ENCODE measurements at regions of chr7 and their contacts with region 1.

Region 1: DNA sequence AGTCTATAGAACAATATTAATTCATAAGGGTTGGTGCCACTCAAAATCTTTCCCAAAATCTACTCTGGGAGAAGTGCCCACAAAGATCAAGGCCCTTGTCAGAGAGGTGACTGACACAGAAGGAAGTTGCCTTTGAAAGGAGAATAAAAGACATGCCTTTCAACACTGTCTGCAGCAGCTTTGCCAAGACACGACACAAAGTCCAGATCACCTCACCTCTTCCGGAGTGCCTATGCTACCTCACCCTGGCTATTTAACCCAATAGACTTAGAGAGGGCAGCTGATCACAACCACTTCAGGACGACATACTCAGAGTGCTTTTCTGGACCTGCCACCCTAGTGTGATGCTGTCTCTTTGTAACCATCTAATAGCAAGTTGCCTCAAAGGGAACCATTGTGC is 49.0 kb upstream of the YAE1 start:
- DNase-seq: no peak
- H3K4me3 Mint-ChIP-seq: no peak overlapping the region
- H3K27ac Mint-ChIP-seq: no peak overlapping the region
- H3K4me1 Mint-ChIP-seq: no peaks in the 10 kb centered on the region
- H3K27me3 Mint-ChIP-seq: peaks cover 3% of the 10 kb centered on the region

Region 2: GRCh38 chr7:38932509-38933168 is 584.6 kb before region 1 on chr7:
- CTCF ChIA-PET with region 1: interaction called, 4 read pairs
- intact Hi-C with region 1: loop called (anchors 1 kb)
- DNase-seq: peak; percentile 70
- H3K4me3 Mint-ChIP-seq: no peak overlapping the region
- H3K27ac Mint-ChIP-seq: no peak overlapping the region
- H3K4me1 Mint-ChIP-seq: no peaks in the 10 kb centered on the region
- H3K27me3 Mint-ChIP-seq: no peaks in the 10 kb centered on the region

Region 3: DNA sequence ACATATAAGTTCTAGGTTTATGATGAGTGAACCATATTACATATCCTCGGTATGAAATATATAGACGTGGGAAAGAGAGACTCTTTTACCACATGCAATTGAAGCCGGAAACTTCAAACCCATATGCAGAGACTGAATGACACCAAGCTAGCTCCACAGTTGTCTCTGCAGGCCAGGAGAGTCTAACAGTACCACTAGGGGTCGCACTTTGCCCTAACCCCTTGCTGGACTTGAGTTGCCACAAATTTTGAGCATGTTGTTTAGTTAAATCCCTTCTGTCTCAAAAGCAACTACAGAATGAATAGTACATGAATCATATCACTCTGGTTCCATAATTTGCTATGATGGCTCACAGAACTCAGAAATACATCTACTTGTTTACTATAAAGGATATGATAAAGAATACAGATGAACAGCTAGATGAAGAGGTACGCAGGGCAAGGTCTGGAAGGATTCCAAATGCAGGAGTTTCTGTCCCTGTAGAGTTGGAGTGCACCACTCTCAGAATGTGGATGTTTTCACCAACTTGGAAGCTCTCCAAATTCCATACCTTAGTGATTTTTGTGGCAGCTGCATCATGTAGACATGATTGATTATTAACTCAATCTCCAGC is 63.4 kb before region 1 on chr7:
- CTCF ChIA-PET with region 1: interaction called, 42 read pairs
- intact Hi-C with region 1: loop called (anchors 1 kb)
- DNase-seq: peak; percentile 75
- H3K4me3 Mint-ChIP-seq: no peak overlapping the region
- H3K27ac Mint-ChIP-seq: no peak overlapping the region
- H3K4me1 Mint-ChIP-seq: no peaks in the 10 kb centered on the region
- H3K27me3 Mint-ChIP-seq: peaks cover 7% of the 10 kb centered on the region

Region 4: GRCh38 chr7:39540320-39540719 is 23.1 kb after region 1 on chr7:
- CTCF ChIA-PET with region 1: no interaction called
- intact Hi-C with region 1: no loop called
- DNase-seq: no peak
- H3K4me3 Mint-ChIP-seq: no peak overlapping the region
- H3K27ac Mint-ChIP-seq: no peak overlapping the region
- H3K4me1 Mint-ChIP-seq: no peaks in the 10 kb centered on the region
- H3K27me3 Mint-ChIP-seq: peaks cover 3% of the 10 kb centered on the region

Measured in activated naive CD4-positive, alpha-beta T cell treated with anti-CD3 and anti-CD28 coated beads for 36 hours (primary cell).